CD4-positive, alpha-beta T cell (primary cell): ENCODE measurements at regions of chr1 and their contacts with region 1.

Region 1: GRCh38 chr1:26378088-26378878 is 5.7 kb upstream of the ZNF683 start:
- DNase-seq: peak; percentile 56 to 94 (median 76)
- ATAC-seq: peak; percentile 92
- H3K4me3 ChIP-seq: peak overlapping the region; percentile 22
- H3K4me3 Mint-ChIP-seq: peak overlapping the region; percentile 74
- H3K27ac ChIP-seq: peak overlapping the region; percentile 53 to 60
- H3K27ac Mint-ChIP-seq: peak overlapping the region; percentile 92
- H3K4me1 ChIP-seq: peaks cover 77% of the 10 kb centered on the region
- H3K4me1 Mint-ChIP-seq: peaks cover 72% of the 10 kb centered on the region
- H3K27me3 ChIP-seq: no peaks in the 10 kb centered on the region
- H3K27me3 Mint-ChIP-seq: no peaks in the 10 kb centered on the region
- CTCF ChIP-seq: no peak

Region 2: GRCh38 chr1:26279456-26280332 is 98.6 kb before region 1 on chr1 and contains the start of gene SH3BGRL3:
- CTCF ChIA-PET with region 1: interaction called, 16 read pairs
- POLR2A ChIA-PET with region 1: interaction called, 16 read pairs
- intact Hi-C with region 1: no loop called
- DNase-seq: peak; percentile 67 to 93 (median 86)
- ATAC-seq: peak; percentile 63
- H3K4me3 ChIP-seq: peak within 1 kb of the TSS; percentile 72
- H3K4me3 Mint-ChIP-seq: peak within 1 kb of the TSS; percentile 92
- H3K27ac ChIP-seq: peak within 1 kb of the TSS; percentile 84 to 91
- H3K27ac Mint-ChIP-seq: peak within 1 kb of the TSS; percentile 95
- H3K4me1 ChIP-seq: peaks cover 90% of the 10 kb centered on the region
- H3K4me1 Mint-ChIP-seq: peaks cover 83% of the 10 kb centered on the region
- H3K27me3 ChIP-seq: no peaks in the 10 kb centered on the region
- H3K27me3 Mint-ChIP-seq: no peaks in the 10 kb centered on the region
- CTCF ChIP-seq: no peak
- total RNA-seq, gene SH3BGRL3: 178 to 193 TPM

Region 3: DNA sequence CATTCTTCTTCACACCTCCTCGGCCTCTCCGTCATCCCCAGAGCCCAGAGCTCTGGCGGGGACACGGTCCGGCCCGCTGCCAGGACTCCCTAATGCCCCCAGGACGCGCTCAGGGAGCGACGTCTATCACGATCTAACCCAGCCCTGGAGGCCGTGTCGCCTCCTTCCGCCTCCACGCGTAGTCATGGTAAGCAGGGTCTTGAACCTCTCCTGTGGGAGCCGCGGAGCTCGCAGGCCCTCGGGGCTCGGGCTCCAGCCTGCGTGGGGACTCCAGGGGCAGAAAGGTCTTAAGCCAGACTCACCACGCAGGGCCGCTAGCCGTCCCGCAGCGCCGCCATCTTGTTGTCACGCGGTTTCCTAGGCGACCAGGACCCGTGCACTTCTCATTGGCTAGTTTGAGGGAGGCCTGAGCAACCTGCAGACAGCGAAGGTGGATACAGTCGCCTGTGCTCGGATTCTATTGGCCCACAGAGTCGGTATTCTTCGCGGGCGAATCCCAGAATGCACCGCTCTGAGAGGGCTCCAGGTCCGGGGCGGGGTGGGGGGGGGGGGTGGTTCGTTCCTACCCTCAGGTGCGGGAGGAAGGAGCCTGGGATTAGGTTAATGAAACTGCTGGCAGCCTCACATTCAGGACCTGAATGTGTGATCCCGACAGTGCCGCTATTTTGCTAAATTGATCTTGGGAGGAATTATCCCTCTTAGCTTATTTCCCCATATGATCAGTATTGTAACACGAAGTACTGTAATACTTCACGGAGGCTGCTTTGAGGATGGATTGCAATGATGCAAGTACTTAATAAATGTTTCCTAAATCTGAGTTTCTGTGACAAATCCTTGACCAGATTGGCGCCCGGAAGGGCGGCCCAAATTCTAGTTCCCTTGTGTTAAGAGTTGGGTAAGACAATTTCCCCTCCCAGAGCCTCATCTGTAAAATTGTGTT is 71.7 kb before region 1 on chr1 and contains the start of gene UBXN11:
- CTCF ChIA-PET with region 1: no interaction called
- POLR2A ChIA-PET with region 1: interaction called, 12 read pairs
- intact Hi-C with region 1: no loop called
- DNase-seq: peak; percentile 81 to 97 (median 88)
- ATAC-seq: peak; percentile 94
- H3K4me3 ChIP-seq: peak within 1 kb of the TSS; percentile 77
- H3K4me3 Mint-ChIP-seq: peak within 1 kb of the TSS; percentile 94
- H3K27ac ChIP-seq: peak within 1 kb of the TSS; percentile 65 to 67
- H3K27ac Mint-ChIP-seq: peak within 1 kb of the TSS; percentile 87
- H3K4me1 ChIP-seq: peaks cover 41% of the 10 kb centered on the region
- H3K4me1 Mint-ChIP-seq: peaks cover 34% of the 10 kb centered on the region
- H3K27me3 ChIP-seq: no peaks in the 10 kb centered on the region
- H3K27me3 Mint-ChIP-seq: no peaks in the 10 kb centered on the region
- CTCF ChIP-seq: no peak
- total RNA-seq, gene UBXN11: 39.3 to 42.3 TPM

Region 4: DNA sequence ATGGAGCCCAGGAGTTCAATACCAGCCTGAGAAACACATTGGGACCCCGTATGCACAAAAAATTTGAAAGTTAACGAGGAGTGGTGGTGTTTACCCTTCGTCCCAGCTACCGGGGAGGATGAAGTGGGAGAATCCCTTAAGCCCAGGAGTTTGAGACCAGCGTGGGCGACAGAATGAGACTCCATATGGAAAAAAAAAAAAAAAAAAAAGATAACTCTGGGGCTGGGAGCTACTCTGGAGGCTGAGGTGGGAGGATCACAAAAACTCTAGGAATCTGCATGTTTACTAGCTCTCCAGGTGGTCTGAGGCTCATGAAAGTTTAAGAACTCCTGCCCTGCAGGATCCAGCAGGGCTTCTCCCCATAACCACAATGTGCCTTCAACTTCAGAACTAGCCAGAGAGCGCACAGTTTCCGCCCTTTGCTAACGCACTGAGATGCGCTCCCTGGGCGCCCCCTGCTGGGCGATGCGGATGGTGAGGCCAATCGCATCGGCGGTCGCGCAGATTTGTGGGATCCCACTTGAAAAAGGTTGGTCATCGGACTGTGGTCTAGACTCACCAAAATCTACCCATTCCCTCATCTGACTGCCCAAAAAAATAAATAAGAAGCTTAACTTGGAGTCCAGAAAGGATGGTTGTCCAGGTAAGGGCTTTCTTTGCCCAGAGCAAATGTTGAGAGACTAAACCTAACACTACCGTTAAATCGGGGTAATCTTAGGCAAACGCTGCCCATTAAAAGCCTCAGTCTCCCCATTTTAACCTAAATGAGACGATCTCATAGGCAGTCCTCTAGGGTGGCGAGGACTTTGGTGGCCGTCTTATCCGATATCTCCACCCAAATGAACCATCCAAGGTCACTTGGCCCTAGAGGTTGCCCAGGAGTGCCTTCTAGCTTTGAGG is 14.5 kb before region 1 on chr1:
- CTCF ChIA-PET with region 1: interaction called, 22 read pairs
- POLR2A ChIA-PET with region 1: interaction called, 34 read pairs
- intact Hi-C with region 1: loop called in 1 of 2 experiments (anchors 2 kb)
- DNase-seq: peak; percentile 74 to 96 (median 84)
- ATAC-seq: peak; percentile 61
- H3K4me3 ChIP-seq: no peak overlapping the region
- H3K4me3 Mint-ChIP-seq: peak overlapping the region; percentile 69
- H3K27ac ChIP-seq: no peak overlapping the region
- H3K27ac Mint-ChIP-seq: no peak overlapping the region
- H3K4me1 ChIP-seq: peaks cover 79% of the 10 kb centered on the region
- H3K4me1 Mint-ChIP-seq: peaks cover 56% of the 10 kb centered on the region
- H3K27me3 ChIP-seq: peaks cover 0 to 21% of the 10 kb centered on the region in 2 experiments
- H3K27me3 Mint-ChIP-seq: peaks cover 28% of the 10 kb centered on the region
- CTCF ChIP-seq: peak; percentile 98

Region 5: DNA sequence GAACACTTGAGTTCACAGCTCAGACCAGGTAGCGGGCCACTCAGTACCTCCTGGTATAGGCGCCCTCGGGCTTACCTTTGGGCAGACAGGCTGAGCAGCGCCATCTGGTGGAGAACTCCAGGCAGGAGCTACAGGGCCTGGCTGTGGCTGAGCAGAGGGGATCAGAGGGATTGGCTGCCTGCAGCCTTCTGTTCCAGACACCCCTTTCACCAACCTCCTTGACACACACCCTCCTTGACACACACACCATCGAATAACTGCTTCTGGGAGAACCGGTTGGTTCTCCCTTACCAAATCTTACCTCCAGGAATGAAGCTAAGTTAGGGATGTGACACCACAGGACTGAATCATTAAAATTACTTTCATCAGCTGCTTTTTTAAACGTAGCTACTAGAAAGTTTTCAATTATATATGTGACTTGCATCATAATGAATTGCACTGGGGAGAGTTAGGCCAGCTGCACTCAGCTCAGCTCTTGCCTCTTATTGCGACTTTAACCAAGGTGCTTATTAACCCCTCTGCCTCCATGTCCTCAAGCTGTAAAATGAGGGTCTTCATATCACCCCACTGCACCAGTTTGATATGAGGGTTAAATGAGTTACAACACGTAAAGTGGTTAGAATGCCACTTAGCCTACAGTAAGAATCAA is 39.0 kb after region 1 on chr1:
- CTCF ChIA-PET with region 1: interaction called, 16 read pairs
- POLR2A ChIA-PET with region 1: interaction called, 7 read pairs
- intact Hi-C with region 1: no loop called
- DNase-seq: peak; percentile 78 to 91 (median 82)
- ATAC-seq: peak; percentile 100
- H3K4me3 ChIP-seq: no peak overlapping the region
- H3K4me3 Mint-ChIP-seq: no peak overlapping the region
- H3K27ac ChIP-seq: no peak overlapping the region
- H3K27ac Mint-ChIP-seq: no peak overlapping the region
- H3K4me1 ChIP-seq: no peaks in the 10 kb centered on the region
- H3K4me1 Mint-ChIP-seq: no peaks in the 10 kb centered on the region
- H3K27me3 ChIP-seq: peaks cover 19 to 27% of the 10 kb centered on the region in 2 experiments
- H3K27me3 Mint-ChIP-seq: peaks cover 40% of the 10 kb centered on the region
- CTCF ChIP-seq: peak; percentile 95